Psoas muscle (tissue), 8 donors: ENCODE measurements at regions of chr11 and their contacts with region 1.

Region 1: GRCh38 chr11:57644748-57645688 is 4.7 kb downstream of the YPEL4 start:
- DNase-seq: peak; percentile 78 to 87
- ATAC-seq: peak; percentile 75 to 89 (median 82)
- H3K4me3 ChIP-seq: no peak overlapping the region
- H3K27ac ChIP-seq: no peak overlapping the region
- H3K4me1 ChIP-seq: peaks cover 8% of the 10 kb centered on the region
- H3K27me3 ChIP-seq: peaks cover 0 to 45% (median 30%) of the 10 kb centered on the region in 3 donors
- CTCF ChIP-seq: peak; percentile 81

Region 2: DNA sequence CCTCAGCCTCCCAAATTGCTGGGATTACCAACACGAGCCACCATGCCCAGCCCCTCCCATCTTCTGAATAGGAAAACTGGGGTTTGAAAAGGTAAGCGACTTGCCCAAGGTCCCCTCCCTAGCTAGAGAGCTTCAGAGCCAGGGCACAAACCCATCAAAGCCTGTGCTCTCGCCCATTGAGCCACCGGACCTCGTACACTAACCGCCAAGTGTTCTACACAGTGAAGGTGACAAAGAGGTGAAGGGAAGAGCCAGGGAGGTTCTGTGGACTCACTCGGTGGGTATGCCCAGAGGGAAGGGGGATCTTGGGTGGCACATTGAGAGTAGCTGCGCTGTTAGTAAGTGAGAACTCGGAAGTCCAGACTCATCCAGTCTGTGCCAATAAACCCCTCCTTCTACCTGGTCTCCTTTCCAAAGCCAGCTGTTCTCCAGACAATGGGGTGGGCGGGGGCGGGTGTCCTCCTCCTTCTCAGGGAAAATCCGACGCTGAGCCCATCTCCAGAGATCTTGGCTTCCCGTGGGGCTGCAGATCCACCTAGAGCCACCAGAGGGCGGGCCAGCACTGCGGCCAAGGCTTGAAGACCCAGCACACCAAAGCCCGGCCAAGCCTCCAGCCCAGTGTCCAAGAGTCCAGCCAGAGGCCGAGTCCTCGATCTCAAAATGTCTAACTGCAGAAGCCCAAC is 187.9 kb before region 1 on chr11:
- intact Hi-C with region 1: loop called (anchors 2 kb)
- DNase-seq: peak; percentile 92 to 95
- ATAC-seq: peak; percentile 89 to 96 (median 94)
- H3K4me3 ChIP-seq: peak overlapping the region; percentile 4
- H3K27ac ChIP-seq: no peak overlapping the region
- H3K4me1 ChIP-seq: peaks cover 19% of the 10 kb centered on the region
- H3K27me3 ChIP-seq: peaks cover 0 to 38% (median 18%) of the 10 kb centered on the region in 3 donors
- CTCF ChIP-seq: peak; percentile 99

Region 3: DNA sequence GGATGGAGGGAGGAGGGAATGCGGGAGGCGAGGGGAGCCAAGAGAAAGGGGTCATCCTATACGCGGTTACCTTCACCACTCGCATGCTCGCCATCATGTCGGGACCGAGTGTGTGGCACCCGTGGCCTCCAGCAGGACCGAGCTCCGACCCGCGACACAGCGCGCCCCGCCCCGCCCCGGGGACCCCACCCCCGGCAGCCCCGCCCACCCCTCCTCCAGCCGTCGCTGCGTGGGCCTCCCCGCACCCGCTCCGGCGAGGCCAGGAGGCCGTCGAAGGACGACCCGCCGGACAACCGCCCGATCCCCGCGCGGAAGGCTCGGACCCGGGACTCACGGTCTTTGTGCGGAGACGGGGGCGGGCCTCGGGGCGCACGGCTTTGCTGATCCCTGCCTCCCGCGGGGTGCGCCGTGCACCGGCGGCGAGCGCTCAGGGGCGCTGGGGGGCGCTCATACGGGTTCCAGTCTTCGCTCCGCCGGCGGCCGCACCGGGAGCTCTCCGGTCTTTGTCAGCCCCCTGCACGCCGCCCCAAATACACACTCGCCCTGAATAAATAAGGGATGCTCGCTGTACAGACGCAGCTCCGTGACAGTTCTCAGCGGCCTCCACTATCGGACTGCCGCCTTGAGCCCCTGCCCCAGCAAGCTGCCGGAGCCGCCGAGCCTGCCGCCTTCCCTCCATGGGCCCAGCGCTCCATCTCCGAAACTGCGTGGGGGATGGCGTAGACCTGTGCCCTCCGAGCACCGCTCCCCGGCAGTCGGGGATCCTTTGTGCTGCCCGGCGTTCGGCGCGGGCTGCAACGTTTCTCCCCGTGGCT is 77.3 kb before region 1 on chr11 and contains the start of gene UBE2L6:
- intact Hi-C with region 1: loop called (anchors 2 to 5 kb)
- DNase-seq: peak; percentile 50 to 88
- ATAC-seq: peak; percentile 59 to 87 (median 80)
- H3K4me3 ChIP-seq: peak within 1 kb of the TSS; percentile 71
- H3K27ac ChIP-seq: peak within 1 kb of the TSS; percentile 19
- H3K4me1 ChIP-seq: peaks cover 6% of the 10 kb centered on the region
- H3K27me3 ChIP-seq: peaks cover 0 to 21% (median 0%) of the 10 kb centered on the region in 3 donors
- CTCF ChIP-seq: no peak
- total RNA-seq, gene UBE2L6: 6.8 to 24.7 (median 12.3) TPM